MCF 10A (cell line): ENCODE measurements at regions of chr1 and their contacts with region 1.

Region 1: DNA sequence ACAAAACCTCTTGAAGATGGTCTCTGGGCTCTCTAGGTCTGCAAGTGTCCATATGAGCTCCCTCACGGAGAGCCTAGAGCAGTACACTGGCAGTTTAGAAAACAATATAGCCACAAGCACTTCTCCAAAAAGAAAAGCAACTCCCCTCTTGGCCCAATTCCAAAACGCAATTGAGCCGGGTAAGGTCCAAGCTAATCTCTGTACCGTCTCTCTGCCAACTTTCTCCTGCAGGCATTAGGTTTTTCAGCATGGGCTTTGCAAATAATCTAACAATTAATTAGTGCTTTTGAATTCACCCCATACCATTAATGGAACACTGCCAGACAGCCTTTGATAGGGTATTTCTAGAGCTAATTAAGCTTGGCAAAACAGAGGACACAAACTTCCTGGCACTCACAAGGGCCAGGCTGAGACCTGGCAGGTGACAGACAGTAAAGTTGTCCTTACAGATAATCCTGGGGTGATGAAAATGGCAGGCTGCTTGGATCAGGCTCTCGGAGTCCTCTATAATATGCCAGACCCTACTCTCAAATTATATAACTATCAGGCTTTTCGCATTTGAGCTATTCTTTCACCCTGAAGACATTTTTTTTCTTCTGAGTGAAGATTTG is 39.8 kb downstream of the TGFBR3 start:
- DNase-seq: peak; percentile 91
- H3K4me3 Mint-ChIP-seq: peak overlapping the region; percentile 25
- H3K27ac Mint-ChIP-seq: peak overlapping the region; percentile 88
- H3K4me1 Mint-ChIP-seq: peaks cover 40% of the 10 kb centered on the region
- H3K27me3 Mint-ChIP-seq: no peaks in the 10 kb centered on the region
- CTCF ChIP-seq: no peak

Region 2: GRCh38 chr1:91537281-91537986 is 308.7 kb before region 1 on chr1:
- CTCF ChIA-PET with region 1: no interaction called
- POLR2A ChIA-PET with region 1: interaction called, 25 read pairs
- intact Hi-C with region 1: no loop called
- DNase-seq: peak; percentile 66
- H3K4me3 Mint-ChIP-seq: peak overlapping the region; percentile 19
- H3K27ac Mint-ChIP-seq: peak overlapping the region; percentile 76
- H3K4me1 Mint-ChIP-seq: peaks cover 25% of the 10 kb centered on the region
- H3K27me3 Mint-ChIP-seq: no peaks in the 10 kb centered on the region
- CTCF ChIP-seq: no peak

Region 3: DNA sequence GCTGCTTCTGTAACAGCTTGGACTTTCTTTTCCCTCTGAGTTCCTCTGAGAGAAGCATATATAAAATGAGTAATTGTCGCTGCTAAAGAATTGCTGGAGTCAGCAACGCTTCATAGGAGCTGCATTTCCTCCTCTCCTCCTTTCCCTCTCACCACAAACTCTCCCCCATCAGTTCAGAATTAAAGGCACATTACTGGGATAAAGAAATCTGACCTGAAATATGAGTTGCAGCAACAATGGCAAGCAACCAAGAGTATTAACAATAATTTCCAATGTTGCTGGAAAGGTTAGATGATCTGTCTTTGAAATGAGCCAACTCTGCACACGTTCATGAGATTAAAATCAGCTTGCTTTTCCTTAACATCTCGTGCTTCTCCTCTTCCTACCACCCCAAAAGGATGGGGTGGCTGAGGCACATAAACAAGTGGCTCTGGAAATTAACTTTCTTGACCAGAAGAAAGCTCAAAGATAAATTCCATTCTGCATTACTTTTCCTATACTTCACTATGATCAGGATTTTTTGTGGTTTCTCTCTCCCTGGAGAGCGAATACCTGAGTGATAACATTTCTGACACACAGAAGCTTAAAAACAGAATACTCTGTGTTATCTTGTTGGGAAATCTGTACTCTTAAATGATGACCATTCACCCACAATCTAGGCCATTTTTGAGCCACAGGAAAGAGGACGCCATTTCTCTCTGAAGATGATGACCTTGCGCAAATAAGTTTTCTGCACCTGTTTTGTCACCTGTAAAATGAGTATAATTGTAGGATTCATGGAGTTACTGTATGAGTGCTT is 50.3 kb before region 1 on chr1:
- CTCF ChIA-PET with region 1: interaction called, 4 read pairs
- POLR2A ChIA-PET with region 1: interaction called, 10 read pairs
- intact Hi-C with region 1: no loop called
- DNase-seq: no peak
- H3K4me3 Mint-ChIP-seq: peak overlapping the region; percentile 27
- H3K27ac Mint-ChIP-seq: peak overlapping the region; percentile 37
- H3K4me1 Mint-ChIP-seq: peaks cover 59% of the 10 kb centered on the region
- H3K27me3 Mint-ChIP-seq: no peaks in the 10 kb centered on the region
- CTCF ChIP-seq: no peak

Region 4: GRCh38 chr1:91819038-91819788 is 26.9 kb before region 1 on chr1:
- CTCF ChIA-PET with region 1: no interaction called
- POLR2A ChIA-PET with region 1: interaction called, 42 read pairs
- intact Hi-C with region 1: no loop called
- DNase-seq: no peak
- H3K4me3 Mint-ChIP-seq: no peak overlapping the region
- H3K27ac Mint-ChIP-seq: peak overlapping the region; percentile 85
- H3K4me1 Mint-ChIP-seq: peaks cover 32% of the 10 kb centered on the region
- H3K27me3 Mint-ChIP-seq: no peaks in the 10 kb centered on the region
- CTCF ChIP-seq: no peak

Region 5: GRCh38 chr1:91856996-91857395 is 10.9 kb after region 1 on chr1:
- CTCF ChIA-PET with region 1: interaction called, 6 read pairs
- POLR2A ChIA-PET with region 1: interaction called, 19 read pairs
- intact Hi-C with region 1: no loop called
- DNase-seq: no peak
- H3K4me3 Mint-ChIP-seq: no peak overlapping the region
- H3K27ac Mint-ChIP-seq: no peak overlapping the region
- H3K4me1 Mint-ChIP-seq: no peaks in the 10 kb centered on the region
- H3K27me3 Mint-ChIP-seq: no peaks in the 10 kb centered on the region
- CTCF ChIP-seq: no peak

Region 6: GRCh38 chr1:91876040-91876470 is 29.9 kb after region 1 on chr1:
- CTCF ChIA-PET with region 1: interaction called, 4 read pairs
- POLR2A ChIA-PET with region 1: interaction called, 27 read pairs
- intact Hi-C with region 1: no loop called
- DNase-seq: no peak
- H3K4me3 Mint-ChIP-seq: no peak overlapping the region
- H3K27ac Mint-ChIP-seq: no peak overlapping the region
- H3K4me1 Mint-ChIP-seq: peaks cover 56% of the 10 kb centered on the region
- H3K27me3 Mint-ChIP-seq: no peaks in the 10 kb centered on the region
- CTCF ChIP-seq: no peak